HCT116 (cell line): ENCODE measurements at regions of chr9 and their contacts with region 1.

Region 1: DNA sequence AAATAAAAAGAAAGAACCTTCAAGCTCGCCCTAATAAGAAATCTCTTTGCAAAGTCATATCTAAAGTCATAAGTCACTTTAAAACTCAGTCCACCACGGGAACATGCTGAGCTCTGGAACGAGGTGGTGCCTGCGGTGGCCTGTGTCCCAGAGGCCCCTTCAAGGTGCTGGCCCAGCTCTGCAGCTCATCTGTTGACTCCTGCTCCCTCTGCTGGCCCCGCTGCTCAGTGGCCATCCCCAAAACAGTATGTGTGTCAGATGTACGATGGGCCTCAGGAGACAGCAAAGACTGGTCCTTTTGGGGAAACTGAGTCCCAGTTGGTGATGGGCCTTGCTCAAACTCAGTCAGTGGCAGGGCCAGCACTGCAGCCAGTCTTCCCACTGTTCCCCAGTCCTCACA is 22.8 kb upstream of the FOXB2 start:
- DNase-seq: no peak
- ATAC-seq: peak; percentile 98
- H3K4me3 ChIP-seq: no peak overlapping the region
- H3K27ac ChIP-seq: no peak overlapping the region
- H3K4me1 ChIP-seq: no peaks in the 10 kb centered on the region
- H3K27me3 ChIP-seq: no peaks in the 10 kb centered on the region
- CTCF ChIP-seq: peak; percentile 45 to 75 (median 67)
- POLR2A ChIP-seq: no peak
- RAD21 ChIP-seq: peak; percentile 59

Region 2: DNA sequence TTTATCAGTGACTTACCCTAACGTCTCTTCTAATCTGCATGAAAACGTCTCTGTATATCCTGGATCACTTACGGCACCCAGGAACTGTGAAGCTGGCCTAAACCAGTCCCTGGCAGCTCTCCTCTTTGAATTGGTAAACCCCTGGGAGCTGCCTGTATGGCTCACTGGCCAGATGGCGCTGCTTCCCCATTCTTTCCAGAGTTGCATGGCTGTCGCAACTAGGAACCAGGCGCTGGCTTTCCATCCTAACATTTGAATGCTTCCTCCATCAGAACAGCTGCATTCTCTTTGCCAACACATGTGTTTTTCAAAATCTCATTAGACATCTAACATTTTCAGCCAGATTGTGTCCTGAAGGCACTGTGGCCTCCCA is 240.4 kb before region 1 on chr9:
- CTCF ChIA-PET with region 1: interaction called, 12 read pairs
- POLR2A ChIA-PET with region 1: no interaction called
- RAD21 ChIA-PET with region 1: no interaction called
- intact Hi-C with region 1: no loop called
- DNase-seq: no peak
- ATAC-seq: peak; percentile 71; the same call in 1 of the 2 replicates
- H3K4me3 ChIP-seq: no peak overlapping the region
- H3K27ac ChIP-seq: no peak overlapping the region
- H3K4me1 ChIP-seq: no peaks in the 10 kb centered on the region
- H3K27me3 ChIP-seq: no peaks in the 10 kb centered on the region; the same call in 1 of the 2 replicates
- CTCF ChIP-seq: peak; percentile 23 to 33 (median 23); a peak in 4 of 6 replicates
- POLR2A ChIP-seq: no peak
- RAD21 ChIP-seq: peak; percentile 46

Region 3: GRCh38 chr9:77011973-77012821 is 15.5 kb after region 1 on chr9:
- CTCF ChIA-PET with region 1: interaction called, 12 read pairs
- POLR2A ChIA-PET with region 1: no interaction called
- RAD21 ChIA-PET with region 1: no interaction called
- intact Hi-C with region 1: no loop called
- DNase-seq: peak; percentile 38
- ATAC-seq: peak; percentile 95
- H3K4me3 ChIP-seq: peak overlapping the region; percentile 31 to 51
- H3K27ac ChIP-seq: no peak overlapping the region
- H3K4me1 ChIP-seq: peaks cover 4 to 11% of the 10 kb centered on the region in 2 experiments; a peak in 3 of 4 replicates
- H3K27me3 ChIP-seq: no peaks in the 10 kb centered on the region
- CTCF ChIP-seq: peak; percentile 55 to 81 (median 74); a peak in 5 of 6 replicates
- POLR2A ChIP-seq: no peak
- RAD21 ChIP-seq: peak; percentile 69